Posterior cingulate gyrus (tissue), 11 donors: ENCODE measurements at regions of chr2 and their contacts with region 1.

Region 1: GRCh38 chr2:24792874-24793760 is at the starts of genes CENPO and PTRHD1:
- DNase-seq: peak; percentile 93 to 99 (median 96)

Region 2: DNA sequence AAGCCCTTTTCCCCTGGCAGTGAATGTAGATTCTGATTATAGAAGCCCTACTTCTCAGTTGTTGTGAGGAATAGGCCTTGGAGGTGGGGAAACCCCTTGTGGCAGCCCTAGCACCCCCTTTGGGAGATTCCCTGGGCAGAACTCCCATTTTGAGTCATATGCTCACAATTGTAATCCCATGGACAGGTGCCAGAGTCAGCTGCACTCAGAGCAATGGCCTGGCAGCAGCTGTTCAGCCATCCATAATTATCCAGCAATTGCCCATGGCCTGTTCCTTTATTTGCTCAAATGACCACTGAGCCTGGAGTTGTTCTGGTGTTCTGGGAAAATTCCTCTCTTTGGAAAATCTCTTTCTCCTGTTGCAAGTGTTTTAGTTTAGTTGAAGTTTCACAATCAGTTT is 71.6 kb before region 1 on chr2:
- intact Hi-C with region 1: loop called (anchors 1 kb)
- DNase-seq: peak; percentile 48 to 95 (median 78)

Region 3: GRCh38 chr2:24827321-24828237 is 34.5 kb after region 1 on chr2:
- intact Hi-C with region 1: no loop called
- DNase-seq: peak; percentile 74 to 97 (median 86)